Activated B cell treated with CpG ODN at 0.5 μM for 24 hours (primary cell): ENCODE measurements at regions of chr11 and their contacts with region 1.

Region 1: GRCh38 chr11:106087815-106088435 is 10.5 kb downstream of the AASDHPPT start:
- DNase-seq: no peak
- ATAC-seq: peak; percentile 57
- H3K4me3 Mint-ChIP-seq: no peak overlapping the region
- H3K27ac Mint-ChIP-seq: no peak overlapping the region
- H3K4me1 Mint-ChIP-seq: peaks cover 35% of the 10 kb centered on the region
- H3K27me3 Mint-ChIP-seq: no peaks in the 10 kb centered on the region
- CTCF ChIP-seq: no peak

Region 2: DNA sequence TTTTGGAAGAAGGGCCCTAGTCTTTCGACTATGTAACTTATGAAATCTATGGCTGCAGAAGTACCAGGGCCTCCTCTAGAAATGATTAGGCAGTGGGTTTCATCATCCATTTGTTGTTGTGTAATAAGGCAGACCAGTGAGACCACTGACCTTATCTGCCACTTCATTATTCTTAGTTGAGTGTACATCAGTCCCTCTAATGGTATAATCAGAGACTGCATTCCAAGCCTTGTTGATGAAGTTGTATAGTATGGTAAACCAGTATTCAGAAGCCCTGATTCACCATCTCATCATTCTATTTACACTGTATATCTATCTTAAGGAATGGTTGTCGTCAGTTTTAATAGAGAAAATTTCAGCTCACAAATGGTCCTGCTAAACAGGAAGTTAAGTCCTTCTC is 510.3 kb before region 1 on chr11:
- CTCF ChIA-PET with region 1: no interaction called
- POLR2A ChIA-PET with region 1: no interaction called
- intact Hi-C with region 1: no loop called
- DNase-seq: no peak
- ATAC-seq: no peak
- H3K4me3 Mint-ChIP-seq: no peak overlapping the region
- H3K27ac Mint-ChIP-seq: no peak overlapping the region
- H3K4me1 Mint-ChIP-seq: no peaks in the 10 kb centered on the region
- H3K27me3 Mint-ChIP-seq: no peaks in the 10 kb centered on the region
- CTCF ChIP-seq: no peak

Region 3: GRCh38 chr11:107043242-107044006 is 955.5 kb after region 1 on chr11:
- CTCF ChIA-PET with region 1: no interaction called
- POLR2A ChIA-PET with region 1: no interaction called
- intact Hi-C with region 1: loop called (anchors 5 kb)
- DNase-seq: no peak
- ATAC-seq: no peak
- H3K4me3 Mint-ChIP-seq: no peak overlapping the region
- H3K27ac Mint-ChIP-seq: no peak overlapping the region
- H3K4me1 Mint-ChIP-seq: no peaks in the 10 kb centered on the region
- H3K27me3 Mint-ChIP-seq: no peaks in the 10 kb centered on the region
- CTCF ChIP-seq: no peak